ENCODE measurements at regions of chr4 and their contacts with region 1.

Region 1: GRCh38 chr4:76738086-76738931 is 159.6 kb downstream of the SOWAHB start:
- DNase-seq: peak; percentile 27 to 92
- H3K4me3 ChIP-seq: peak overlapping the region in 1 of 2 donors; percentile 34
- H3K27ac ChIP-seq: peak overlapping the region; percentile 92 to 97
- H3K4me1 ChIP-seq: peaks cover 21 to 44% of the 10 kb centered on the region in 2 donors
- H3K27me3 ChIP-seq: no peaks in the 10 kb centered on the region
- CTCF ChIP-seq: no peak

Region 2: GRCh38 chr4:76624241-76624681 is 114.0 kb before region 1 on chr4:
- intact Hi-C with region 1: loop called (anchors 5 kb)
- DNase-seq: peak; percentile 30 to 92
- H3K4me3 ChIP-seq: peak overlapping the region in 1 of 2 donors; percentile 34
- H3K27ac ChIP-seq: peak overlapping the region; percentile 84 to 86
- H3K4me1 ChIP-seq: peaks cover 15 to 50% of the 10 kb centered on the region in 2 donors
- H3K27me3 ChIP-seq: no peaks in the 10 kb centered on the region
- CTCF ChIP-seq: no peak

Region 3: GRCh38 chr4:76639292-76639691 is 99.0 kb before region 1 on chr4:
- intact Hi-C with region 1: loop called (anchors 5 kb)
- DNase-seq: peak in 1 of 2 donors; percentile 75
- H3K4me3 ChIP-seq: peak overlapping the region in 1 of 2 donors; percentile 10
- H3K27ac ChIP-seq: peak overlapping the region; percentile 52 to 65
- H3K4me1 ChIP-seq: peaks cover 8 to 44% of the 10 kb centered on the region in 2 donors
- H3K27me3 ChIP-seq: no peaks in the 10 kb centered on the region
- CTCF ChIP-seq: no peak

Region 4: GRCh38 chr4:76689241-76689817 is 49.0 kb before region 1 on chr4:
- intact Hi-C with region 1: loop called (anchors 5 kb)
- DNase-seq: peak in 1 of 2 donors; percentile 71
- H3K4me3 ChIP-seq: peak overlapping the region; percentile 64 to 97
- H3K27ac ChIP-seq: peak overlapping the region; percentile 89 to 98
- H3K4me1 ChIP-seq: peaks cover 0 to 28% of the 10 kb centered on the region in 2 donors
- H3K27me3 ChIP-seq: no peaks in the 10 kb centered on the region
- CTCF ChIP-seq: peak in 1 of 3 experiments; percentile 19

Region 5: GRCh38 chr4:76716658-76717057 is 21.7 kb before region 1 on chr4:
- intact Hi-C with region 1: loop called (anchors 2 kb)
- DNase-seq: no peak
- H3K4me3 ChIP-seq: no peak overlapping the region
- H3K27ac ChIP-seq: peak overlapping the region; percentile 50 to 79
- H3K4me1 ChIP-seq: peaks cover 16 to 33% of the 10 kb centered on the region in 2 donors
- H3K27me3 ChIP-seq: no peaks in the 10 kb centered on the region
- CTCF ChIP-seq: no peak

Region 6: GRCh38 chr4:76781698-76782595 is 43.6 kb after region 1 on chr4:
- intact Hi-C with region 1: no loop called
- DNase-seq: no peak
- H3K4me3 ChIP-seq: no peak overlapping the region
- H3K27ac ChIP-seq: no peak overlapping the region
- H3K4me1 ChIP-seq: no peaks in the 10 kb centered on the region
- H3K27me3 ChIP-seq: no peaks in the 10 kb centered on the region
- CTCF ChIP-seq: no peak

Region 7: DNA sequence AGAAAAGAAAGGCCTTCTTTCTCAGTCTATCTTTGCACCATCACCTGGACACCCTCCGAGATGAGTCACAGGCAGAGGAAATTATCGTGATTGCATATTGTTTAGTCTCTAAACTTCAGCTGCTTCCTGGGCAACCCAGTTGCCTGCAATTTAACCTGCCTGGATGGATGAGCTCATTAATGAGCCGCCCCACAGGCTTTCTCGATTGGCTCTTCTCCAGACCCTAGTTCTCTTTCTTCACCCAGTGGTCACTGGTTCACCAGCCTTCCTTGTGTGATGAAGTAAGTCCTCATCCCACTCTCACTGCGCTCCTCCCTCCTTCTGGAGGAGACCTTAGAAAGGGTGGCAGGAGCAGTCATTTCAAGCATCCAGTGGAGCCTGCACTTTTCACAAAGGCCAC is 65.2 kb after region 1 on chr4:
- intact Hi-C with region 1: no loop called
- DNase-seq: no peak
- H3K4me3 ChIP-seq: no peak overlapping the region
- H3K27ac ChIP-seq: no peak overlapping the region
- H3K4me1 ChIP-seq: no peaks in the 10 kb centered on the region
- H3K27me3 ChIP-seq: no peaks in the 10 kb centered on the region
- CTCF ChIP-seq: no peak

Measured in ascending aorta (tissue), 2 donors.